Colonic mucosa (tissue), 4 donors: ENCODE measurements at regions of chr6 and their contacts with region 1.

Region 1: DNA sequence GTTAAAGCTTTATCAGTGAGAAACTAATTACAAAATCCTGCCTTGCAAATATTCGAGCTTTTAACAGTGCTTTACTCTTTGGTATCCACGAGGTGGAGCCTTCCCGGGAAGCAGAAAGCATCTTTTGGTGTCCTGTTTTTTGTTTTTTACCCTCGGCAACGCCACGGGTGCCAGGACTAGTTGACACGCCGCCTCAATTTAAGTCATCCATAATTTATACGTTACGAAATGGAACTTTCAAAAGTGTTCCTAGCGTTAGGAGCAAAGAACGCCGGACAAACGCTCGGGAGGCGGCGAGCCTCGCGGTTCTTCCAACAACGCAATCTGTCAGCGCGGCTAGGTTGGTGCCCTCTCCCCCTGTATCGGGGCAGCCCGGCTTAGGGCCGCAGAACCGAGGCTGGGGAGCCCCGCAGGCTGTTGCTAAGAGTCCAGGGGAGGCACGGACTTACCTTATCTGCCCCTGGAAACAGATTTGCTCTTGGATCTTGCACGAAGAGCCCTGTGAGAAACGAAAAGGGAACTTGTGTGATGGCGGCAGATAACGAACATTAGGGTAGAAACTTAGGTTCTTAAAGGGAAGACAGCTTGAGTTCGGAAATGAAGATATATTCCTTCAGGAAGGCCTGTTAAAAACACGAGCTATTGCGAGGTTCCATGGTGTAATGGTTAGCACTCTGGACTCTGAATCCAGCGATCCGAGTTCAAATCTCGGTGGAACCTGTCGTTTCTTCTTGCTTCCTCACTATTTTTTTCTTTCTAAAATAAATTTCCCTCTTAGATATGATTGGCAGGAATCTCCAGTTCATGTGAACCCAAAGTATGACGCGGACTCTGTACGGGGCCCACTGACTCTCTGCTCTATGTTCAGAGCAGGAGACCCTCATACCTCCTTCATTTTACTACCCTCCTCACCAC is 46.2 kb upstream of the ZNF184 start:
- DNase-seq: peak; percentile 72
- H3K4me3 ChIP-seq: peak overlapping the region; percentile 85
- H3K27ac ChIP-seq: peak overlapping the region; percentile 70
- H3K4me1 ChIP-seq: no peaks in the 10 kb centered on the region
- H3K27me3 ChIP-seq: no peaks in the 10 kb centered on the region
- CTCF ChIP-seq: peak; percentile 46

Region 2: GRCh38 chr6:27177485-27178406 is 341.4 kb before region 1 on chr6:
- intact Hi-C with region 1: loop called (anchors 10 kb)
- DNase-seq: peak; percentile 83
- H3K4me3 ChIP-seq: peak overlapping the region; percentile 68
- H3K27ac ChIP-seq: peak overlapping the region; percentile 87
- H3K4me1 ChIP-seq: no peaks in the 10 kb centered on the region
- H3K27me3 ChIP-seq: no peaks in the 10 kb centered on the region
- CTCF ChIP-seq: peak; percentile 36

Region 3: DNA sequence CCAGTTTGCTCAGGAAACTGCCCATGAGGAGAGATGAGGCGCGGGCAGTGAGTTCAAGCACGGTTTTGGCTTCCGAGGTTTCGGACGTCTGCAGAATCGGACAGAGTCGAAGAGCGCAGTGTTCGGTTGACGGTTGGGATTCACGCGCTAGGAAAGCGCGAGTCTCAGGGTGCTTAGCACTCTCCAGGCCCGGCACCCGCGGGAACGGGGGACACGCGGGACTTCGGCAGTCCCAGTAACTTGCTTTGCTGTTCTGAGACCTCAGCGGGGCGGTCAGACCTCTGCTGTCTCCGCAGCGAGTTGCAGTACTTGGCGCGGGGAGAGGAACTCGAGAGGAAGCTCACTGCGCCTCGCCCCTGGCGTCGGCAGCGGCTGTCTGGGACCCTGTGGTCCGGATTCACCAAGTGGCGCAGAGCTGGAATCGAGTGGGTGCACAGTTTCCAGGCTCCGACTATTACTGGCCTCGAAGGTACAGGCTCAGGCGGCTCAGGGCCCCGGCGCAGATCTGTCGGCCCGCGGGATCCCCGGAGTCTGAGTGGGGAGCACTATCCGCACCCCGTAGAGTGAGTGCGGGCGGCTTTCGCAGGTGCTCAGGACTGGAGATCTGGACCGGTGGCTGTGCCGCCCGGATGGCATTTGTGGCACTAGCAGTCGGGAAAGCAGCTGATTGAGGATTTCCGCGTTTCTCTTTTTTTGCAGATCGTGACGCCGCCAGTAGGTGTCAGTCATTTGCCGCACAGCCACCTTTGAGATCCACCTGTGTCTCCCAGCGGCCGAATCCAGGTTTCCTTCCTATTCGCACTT is 206.8 kb before region 1 on chr6 and contains the start of gene POM121L2:
- intact Hi-C with region 1: loop called (anchors 5 kb)
- DNase-seq: peak; percentile 83
- H3K4me3 ChIP-seq: peak within 1 kb of the TSS; percentile 54
- H3K27ac ChIP-seq: no peak within 1 kb of the TSS
- H3K4me1 ChIP-seq: no peaks in the 10 kb centered on the region
- H3K27me3 ChIP-seq: peaks cover 25% of the 10 kb centered on the region
- CTCF ChIP-seq: peak; percentile 55
- total RNA-seq, gene POM121L2: 0.07 to 0.13 TPM

Region 4: GRCh38 chr6:27374824-27375612 is 144.1 kb before region 1 on chr6:
- intact Hi-C with region 1: no loop called
- DNase-seq: peak; percentile 86
- H3K4me3 ChIP-seq: peak overlapping the region; percentile 80
- H3K27ac ChIP-seq: peak overlapping the region; percentile 53
- H3K4me1 ChIP-seq: no peaks in the 10 kb centered on the region
- H3K27me3 ChIP-seq: no peaks in the 10 kb centered on the region
- CTCF ChIP-seq: no peak

Region 5: GRCh38 chr6:27687154-27688013 is 168.2 kb after region 1 on chr6:
- intact Hi-C with region 1: loop called (anchors 10 kb)
- DNase-seq: peak; percentile 86
- H3K4me3 ChIP-seq: peak overlapping the region; percentile 45
- H3K27ac ChIP-seq: peak overlapping the region; percentile 15
- H3K4me1 ChIP-seq: no peaks in the 10 kb centered on the region
- H3K27me3 ChIP-seq: no peaks in the 10 kb centered on the region
- CTCF ChIP-seq: peak; percentile 60

Region 6: DNA sequence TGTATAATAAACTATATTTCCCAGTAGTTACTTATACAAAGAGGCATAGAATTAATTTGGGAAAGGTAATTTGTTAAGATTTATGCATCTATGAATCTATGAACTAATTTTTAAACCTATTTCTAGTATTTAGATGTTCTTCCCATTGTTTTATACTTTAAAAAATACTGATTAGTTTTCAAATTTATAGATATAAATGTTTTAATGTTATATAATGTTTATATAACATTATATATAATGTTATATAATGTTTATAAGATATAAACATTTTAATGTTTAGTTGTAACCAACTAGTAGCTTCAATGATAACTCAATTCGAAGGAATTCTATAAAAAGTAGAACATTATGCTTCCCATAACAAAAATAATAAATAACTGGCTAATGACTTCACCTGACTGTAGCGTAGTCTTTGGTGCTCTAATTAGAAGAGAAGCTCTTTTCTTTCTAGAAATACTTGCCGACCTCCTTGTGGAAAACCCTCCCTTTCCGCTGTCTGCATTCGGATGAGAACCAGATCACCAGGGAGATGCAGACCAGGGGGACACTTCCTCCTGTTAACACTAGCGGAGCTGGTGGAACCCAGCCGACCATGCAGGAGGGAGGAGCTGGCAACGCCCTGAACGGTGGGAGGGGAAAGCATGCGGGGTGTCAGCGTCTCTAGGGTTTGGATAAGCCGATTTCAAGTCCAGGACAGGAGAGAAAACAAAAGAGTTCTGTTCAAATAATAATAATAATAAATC is 234.7 kb after region 1 on chr6:
- intact Hi-C with region 1: loop called (anchors 5 kb)
- DNase-seq: peak; percentile 86
- H3K4me3 ChIP-seq: peak overlapping the region; percentile 71
- H3K27ac ChIP-seq: no peak overlapping the region
- H3K4me1 ChIP-seq: no peaks in the 10 kb centered on the region
- H3K27me3 ChIP-seq: no peaks in the 10 kb centered on the region
- CTCF ChIP-seq: no peak

Region 7: DNA sequence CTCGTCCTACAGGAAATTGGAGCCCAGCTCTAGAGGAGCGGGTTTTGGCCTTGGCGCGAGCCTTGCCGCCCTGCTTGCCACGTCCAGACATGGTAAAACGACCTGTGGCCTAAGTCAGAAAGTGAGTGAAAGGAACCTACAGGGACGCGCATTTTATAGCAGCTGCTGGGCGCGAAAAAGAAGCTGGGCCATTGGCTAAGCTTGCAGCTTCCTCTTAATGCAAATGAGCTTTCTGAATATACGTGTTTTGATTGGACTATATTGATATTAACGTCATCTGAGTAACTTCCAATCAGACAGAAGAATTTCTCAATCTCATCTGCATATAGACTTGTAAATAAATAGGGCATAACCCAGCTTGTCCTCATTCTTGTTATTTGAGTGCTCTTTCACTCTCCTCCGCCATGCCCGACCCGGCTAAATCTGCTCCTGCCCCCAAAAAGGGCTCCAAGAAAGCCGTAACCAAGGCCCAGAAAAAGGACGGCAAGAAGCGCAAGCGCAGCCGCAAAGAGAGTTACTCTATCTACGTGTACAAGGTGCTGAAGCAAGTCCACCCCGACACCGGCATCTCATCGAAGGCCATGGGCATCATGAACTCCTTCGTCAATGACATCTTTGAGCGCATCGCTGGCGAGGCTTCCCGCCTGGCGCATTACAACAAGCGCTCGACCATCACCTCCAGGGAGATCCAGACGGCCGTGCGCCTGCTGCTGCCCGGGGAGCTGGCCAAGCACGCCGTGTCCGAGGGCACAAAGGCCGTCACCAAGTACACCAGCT is 374.1 kb after region 1 on chr6:
- intact Hi-C with region 1: loop called (anchors 10 kb)
- DNase-seq: peak; percentile 95
- H3K4me3 ChIP-seq: peak overlapping the region; percentile 59
- H3K27ac ChIP-seq: peak overlapping the region; percentile 89
- H3K4me1 ChIP-seq: no peaks in the 10 kb centered on the region
- H3K27me3 ChIP-seq: no peaks in the 10 kb centered on the region
- CTCF ChIP-seq: no peak